ENCODE measurements at regions of chr4 and their contacts with region 1.

Region 1: DNA sequence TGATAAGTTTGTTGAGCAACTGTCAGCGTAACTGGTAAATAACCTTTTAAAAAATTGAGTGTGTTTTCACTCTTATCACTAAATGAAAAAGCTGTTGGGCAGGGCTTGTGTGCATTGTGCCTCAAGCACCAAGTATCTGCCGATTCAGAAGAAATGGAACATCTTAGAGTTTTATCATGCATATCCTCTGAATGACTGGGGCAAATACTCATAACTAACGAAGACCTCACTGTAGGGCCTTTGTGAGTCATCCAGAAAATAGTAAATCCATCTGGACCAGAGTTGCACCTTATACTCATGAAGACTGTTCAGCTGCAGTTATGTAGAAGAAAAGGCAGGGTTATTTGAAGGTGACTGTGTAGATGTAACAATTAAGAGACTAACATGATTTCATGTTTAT is 222.1 kb downstream of the CAMK2D start:
- DNase-seq: peak; percentile 39
- H3K4me3 ChIP-seq: no peak overlapping the region
- H3K27ac ChIP-seq: no peak overlapping the region
- H3K4me1 ChIP-seq: no peaks in the 10 kb centered on the region
- H3K27me3 ChIP-seq: no peaks in the 10 kb centered on the region
- CTCF ChIP-seq: no peak

Region 2: DNA sequence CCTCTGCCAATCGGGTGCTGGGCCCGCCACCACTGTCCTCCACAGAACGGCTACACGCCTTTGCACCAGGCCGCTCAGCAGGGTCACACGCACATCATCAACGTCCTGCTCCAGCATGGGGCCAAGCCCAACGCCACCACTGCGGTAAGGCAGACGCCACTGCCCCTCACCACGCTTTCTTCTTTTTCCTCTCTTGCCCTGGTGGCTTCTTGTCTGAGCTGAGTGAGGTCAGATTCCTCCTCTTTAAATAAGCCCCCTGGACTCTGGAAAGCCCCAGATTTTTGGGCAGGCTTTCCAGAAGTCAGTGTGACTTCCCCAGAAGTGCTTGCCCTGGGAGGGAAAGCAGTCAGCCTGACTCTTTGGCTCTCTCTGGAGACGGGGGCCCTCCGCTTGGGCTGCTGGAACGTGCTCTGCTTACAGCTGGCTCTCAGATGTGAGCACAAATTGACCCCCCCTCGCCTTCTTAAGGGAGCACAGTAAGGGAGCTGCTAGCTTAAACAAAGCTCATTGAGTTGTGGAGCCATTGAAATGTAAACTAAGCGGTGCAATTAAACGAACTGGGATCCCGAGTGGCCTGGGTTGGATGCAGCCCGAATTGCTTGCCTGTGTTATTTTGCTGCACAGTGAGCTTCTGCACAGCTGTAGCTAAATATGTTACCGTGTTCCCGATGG is 246.9 kb before region 1 on chr4:
- CTCF ChIA-PET with region 1: no interaction called
- dilution Hi-C with region 1: no loop called
- in situ Hi-C with region 1: loop called in 1 of 2 experiments (anchors 25 kb)
- intact Hi-C with region 1: loop called (anchors 10 kb)
- DNase-seq: no peak
- H3K4me3 ChIP-seq: no peak overlapping the region
- H3K27ac ChIP-seq: no peak overlapping the region
- H3K4me1 ChIP-seq: no peaks in the 10 kb centered on the region
- H3K27me3 ChIP-seq: no peaks in the 10 kb centered on the region
- CTCF ChIP-seq: no peak